ENCODE measurements at regions of chr4 and their contacts with region 1.

Region 1: GRCh38 chr4:150867148-150867547 is 147.9 kb downstream of the LRBA start:
- DNase-seq: peak; percentile 84
- H3K4me3 ChIP-seq: no peak overlapping the region
- H3K27ac ChIP-seq: no peak overlapping the region
- H3K4me1 ChIP-seq: no peaks in the 10 kb centered on the region
- H3K27me3 ChIP-seq: no peaks in the 10 kb centered on the region
- CTCF ChIP-seq: peak; percentile 20 to 30
- POLR2A ChIP-seq: no peak

Region 2: GRCh38 chr4:149980941-149981340 is 886.2 kb before region 1 on chr4:
- CTCF ChIA-PET with region 1: interaction called, 6 read pairs
- POLR2A ChIA-PET with region 1: no interaction called
- dilution Hi-C with region 1: no loop called
- intact Hi-C with region 1: loop called (anchors 5 kb)
- DNase-seq: peak; percentile 75
- H3K4me3 ChIP-seq: no peak overlapping the region
- H3K27ac ChIP-seq: no peak overlapping the region
- H3K4me1 ChIP-seq: no peaks in the 10 kb centered on the region
- H3K27me3 ChIP-seq: no peaks in the 10 kb centered on the region
- CTCF ChIP-seq: peak; percentile 55 to 71
- POLR2A ChIP-seq: no peak

Region 3: DNA sequence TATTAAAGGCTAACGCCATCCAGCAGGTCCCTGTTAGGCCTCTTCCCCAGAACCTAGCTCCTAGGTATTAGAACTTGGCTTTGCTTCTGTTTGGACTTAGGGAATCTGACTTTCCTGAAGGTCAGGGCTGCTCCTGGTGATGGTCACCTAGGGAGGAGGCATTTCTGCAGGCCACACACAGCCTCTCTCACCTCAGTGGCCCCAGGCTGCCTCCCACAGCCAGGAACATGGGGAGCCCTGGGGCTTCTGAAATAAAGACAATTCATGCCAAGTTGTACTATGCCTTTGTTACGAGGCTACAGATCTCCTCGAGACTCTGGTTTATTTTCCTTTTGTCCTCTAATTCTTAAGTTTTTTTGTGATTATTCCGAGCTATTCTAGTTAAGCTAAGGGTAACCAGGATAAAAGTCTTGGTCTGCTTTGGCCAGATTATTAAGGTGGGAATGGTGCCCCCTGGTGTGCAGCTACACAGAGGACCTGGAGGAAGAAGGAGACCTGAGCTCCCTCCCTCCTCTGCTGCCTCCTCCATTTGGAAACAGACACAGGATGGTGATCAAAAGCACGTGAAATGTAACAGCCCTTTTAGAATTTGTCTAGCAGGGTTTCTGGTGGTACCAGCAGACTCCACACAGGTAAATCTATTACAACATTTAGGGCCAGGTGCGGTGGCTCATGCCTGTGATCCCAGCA is 657.9 kb before region 1 on chr4:
- CTCF ChIA-PET with region 1: interaction called, 24 read pairs
- POLR2A ChIA-PET with region 1: no interaction called
- dilution Hi-C with region 1: no loop called
- intact Hi-C with region 1: no loop called
- DNase-seq: peak; percentile 73
- H3K4me3 ChIP-seq: no peak overlapping the region
- H3K27ac ChIP-seq: no peak overlapping the region
- H3K4me1 ChIP-seq: no peaks in the 10 kb centered on the region
- H3K27me3 ChIP-seq: no peaks in the 10 kb centered on the region
- CTCF ChIP-seq: peak; percentile 59 to 69
- POLR2A ChIP-seq: no peak

Region 4: GRCh38 chr4:150248181-150248580 is 619.0 kb before region 1 on chr4:
- CTCF ChIA-PET with region 1: interaction called, 28 read pairs
- POLR2A ChIA-PET with region 1: no interaction called
- dilution Hi-C with region 1: no loop called
- intact Hi-C with region 1: no loop called
- DNase-seq: no peak
- H3K4me3 ChIP-seq: no peak overlapping the region
- H3K27ac ChIP-seq: no peak overlapping the region
- H3K4me1 ChIP-seq: no peaks in the 10 kb centered on the region
- H3K27me3 ChIP-seq: no peaks in the 10 kb centered on the region
- CTCF ChIP-seq: no peak
- POLR2A ChIP-seq: no peak

Region 5: DNA sequence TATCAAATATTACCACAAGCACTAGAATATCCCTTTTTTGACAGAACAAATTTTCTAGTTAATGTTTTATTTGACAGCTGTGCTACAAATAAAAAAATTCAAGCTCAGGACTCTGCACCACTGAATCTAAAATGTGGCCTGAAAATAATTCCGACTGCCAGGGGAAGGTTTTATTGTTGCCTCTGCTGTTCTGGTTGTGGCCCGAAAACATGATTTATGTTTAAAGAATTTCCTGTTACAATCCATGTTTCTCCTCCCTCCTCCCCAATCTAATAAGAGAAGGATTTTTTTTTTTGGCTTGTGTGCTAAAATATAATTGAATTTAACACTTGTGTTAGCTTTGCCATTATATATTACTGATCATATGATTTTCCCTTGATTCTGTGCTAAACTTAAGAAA is 561.2 kb before region 1 on chr4:
- CTCF ChIA-PET with region 1: interaction called, 212 read pairs
- POLR2A ChIA-PET with region 1: no interaction called
- dilution Hi-C with region 1: no loop called
- intact Hi-C with region 1: no loop called
- DNase-seq: peak; percentile 80
- H3K4me3 ChIP-seq: no peak overlapping the region
- H3K27ac ChIP-seq: peak overlapping the region; percentile 78
- H3K4me1 ChIP-seq: peaks cover 62% of the 10 kb centered on the region
- H3K27me3 ChIP-seq: no peaks in the 10 kb centered on the region
- CTCF ChIP-seq: no peak
- POLR2A ChIP-seq: no peak

Region 6: DNA sequence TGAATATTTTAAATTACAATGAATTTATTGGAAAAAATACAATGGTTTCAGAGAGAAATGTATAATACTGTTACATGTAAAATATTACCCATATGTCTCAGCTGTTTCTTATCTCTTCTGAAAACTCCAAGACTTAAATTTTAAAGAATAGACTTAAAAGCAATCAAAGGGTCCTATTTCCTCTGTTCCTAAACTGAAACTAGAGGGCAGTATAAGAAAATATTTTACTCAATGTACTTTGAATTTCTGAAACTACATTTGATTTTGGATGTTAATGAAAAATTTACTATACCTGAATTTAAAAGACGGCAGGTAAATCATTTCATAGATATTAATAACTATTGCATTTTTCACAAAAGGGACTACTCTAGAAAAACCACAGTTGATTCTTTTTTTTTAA is 52.3 kb before region 1 on chr4:
- CTCF ChIA-PET with region 1: interaction called, 18 read pairs
- POLR2A ChIA-PET with region 1: no interaction called
- dilution Hi-C with region 1: no loop called
- intact Hi-C with region 1: no loop called
- DNase-seq: no peak
- H3K4me3 ChIP-seq: no peak overlapping the region
- H3K27ac ChIP-seq: no peak overlapping the region
- H3K4me1 ChIP-seq: no peaks in the 10 kb centered on the region
- H3K27me3 ChIP-seq: no peaks in the 10 kb centered on the region
- CTCF ChIP-seq: no peak
- POLR2A ChIP-seq: no peak

Region 7: DNA sequence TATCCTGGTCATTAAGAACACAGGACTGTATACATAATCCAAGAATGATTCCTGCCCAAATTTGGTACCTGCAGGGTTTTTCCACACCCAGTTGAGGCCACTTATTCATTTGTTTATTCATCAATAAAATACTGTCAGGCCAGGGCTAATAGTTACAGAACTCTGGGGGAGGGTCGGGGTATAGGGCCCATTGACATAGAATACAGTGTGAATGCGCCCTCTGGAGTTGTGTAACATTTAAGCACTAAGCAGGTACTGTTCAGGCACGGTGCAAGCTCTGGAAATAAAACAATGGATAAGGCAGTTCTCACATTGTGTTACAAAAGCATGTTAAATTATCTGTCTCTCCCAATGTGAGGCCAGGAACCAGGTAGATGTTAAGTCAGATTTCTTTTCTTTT is 178.8 kb after region 1 on chr4:
- CTCF ChIA-PET with region 1: interaction called, 17 read pairs
- POLR2A ChIA-PET with region 1: no interaction called
- dilution Hi-C with region 1: no loop called
- intact Hi-C with region 1: loop called (anchors 5 kb)
- DNase-seq: peak; percentile 30
- H3K4me3 ChIP-seq: no peak overlapping the region
- H3K27ac ChIP-seq: no peak overlapping the region
- H3K4me1 ChIP-seq: no peaks in the 10 kb centered on the region
- H3K27me3 ChIP-seq: no peaks in the 10 kb centered on the region
- CTCF ChIP-seq: peak in 1 of 2 donors; percentile 5
- POLR2A ChIP-seq: no peak